Heart right ventricle (tissue), 16 donors: ENCODE measurements at regions of chr18 and their contacts with region 1.

Region 1: GRCh38 chr18:58529714-58530354 is 99.1 kb downstream of the ALPK2 start:
- DNase-seq: peak; percentile 41 to 58
- ATAC-seq: peak; percentile 46 to 75 (median 58)
- H3K4me3 ChIP-seq: no peak overlapping the region
- H3K27ac ChIP-seq: peak overlapping the region in 2 of 10 donors; percentile 16 to 26
- H3K4me1 ChIP-seq: peaks cover 0 to 8% (median 0%) of the 10 kb centered on the region in 9 donors
- H3K27me3 ChIP-seq: no peaks in the 10 kb centered on the region
- CTCF ChIP-seq: peak; percentile 55 to 86 (median 77)

Region 2: DNA sequence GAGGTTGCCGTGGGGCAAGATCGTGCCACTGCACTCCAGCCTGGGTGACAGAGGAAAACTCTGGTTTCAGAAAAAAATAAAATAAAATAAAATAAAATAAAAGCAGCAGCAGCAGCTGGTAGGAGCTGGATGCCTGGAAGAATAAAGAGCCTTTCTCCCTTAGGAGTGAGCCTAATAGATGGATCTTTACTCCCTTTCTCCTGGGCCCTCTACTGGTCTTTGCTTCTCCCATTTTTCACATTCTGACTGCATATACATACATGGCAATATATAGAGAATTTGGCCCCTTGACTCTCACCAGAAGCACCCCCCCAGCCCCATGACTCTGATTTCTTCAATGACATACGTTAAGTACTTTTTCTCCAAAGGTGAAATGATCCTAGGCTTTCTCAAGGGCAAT is 131.6 kb after region 1 on chr18:
- intact Hi-C with region 1: loop called in 2 of 10 experiments (anchors 5 to 10 kb)
- DNase-seq: no peak
- ATAC-seq: peak in 6 of 8 donors; percentile 45 to 73 (median 58)
- H3K4me3 ChIP-seq: no peak overlapping the region
- H3K27ac ChIP-seq: no peak overlapping the region
- H3K4me1 ChIP-seq: peaks cover 0 to 20% (median 11%) of the 10 kb centered on the region in 9 donors
- H3K27me3 ChIP-seq: no peaks in the 10 kb centered on the region
- CTCF ChIP-seq: peak in 5 of 9 donors; percentile 23 to 49 (median 44)

Region 3: DNA sequence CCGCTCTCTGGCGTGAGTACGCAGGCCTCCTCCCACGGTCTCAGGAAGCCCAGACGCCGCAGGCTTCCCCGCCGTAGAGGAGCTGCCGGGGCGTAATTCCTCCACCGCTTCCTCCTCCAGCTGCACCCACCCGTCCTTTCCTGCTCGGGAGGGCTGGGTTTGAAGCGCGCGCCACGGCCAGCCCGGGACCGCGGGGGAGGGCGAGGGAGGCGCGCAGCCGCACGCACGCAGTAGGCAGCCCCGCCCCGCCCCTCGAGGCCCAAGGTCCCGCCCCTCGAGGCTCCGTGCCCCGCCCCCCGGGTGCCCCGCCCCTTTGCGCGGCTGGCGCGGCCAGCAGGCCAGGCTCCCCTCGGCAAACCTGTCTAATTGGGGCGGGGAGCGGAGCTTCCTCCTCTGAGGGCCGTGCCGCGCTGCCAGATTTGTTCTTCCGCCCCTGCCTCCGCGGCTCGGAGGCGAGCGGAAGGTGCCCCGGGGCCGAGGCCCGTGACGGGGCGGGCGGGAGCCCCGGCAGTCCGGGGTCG is 141.3 kb after region 1 on chr18 and contains the start of gene MALT1:
- intact Hi-C with region 1: loop called in 6 of 10 experiments (anchors 5 to 10 kb)
- DNase-seq: peak; percentile 92 to 95
- ATAC-seq: peak; percentile 97 to 99 (median 98)
- H3K4me3 ChIP-seq: peak within 1 kb of the TSS; percentile 22 to 97 (median 76)
- H3K27ac ChIP-seq: peak within 1 kb of the TSS; percentile 88 to 99 (median 96)
- H3K4me1 ChIP-seq: peaks cover 0 to 42% (median 26%) of the 10 kb centered on the region in 9 donors
- H3K27me3 ChIP-seq: no peaks in the 10 kb centered on the region
- CTCF ChIP-seq: no peak
- total RNA-seq, gene MALT1: 8.1 to 20.0 (median 10.6) TPM

Region 4: GRCh38 chr18:58768293-58768974 is 238.6 kb after region 1 on chr18:
- intact Hi-C with region 1: loop called (anchors 1 to 5 kb)
- DNase-seq: peak; percentile 69 to 77
- ATAC-seq: peak; percentile 88 to 94 (median 92)
- H3K4me3 ChIP-seq: peak overlapping the region in 9 of 10 donors; percentile 9 to 47 (median 33)
- H3K27ac ChIP-seq: peak overlapping the region in 4 of 10 donors; percentile 21 to 30 (median 24)
- H3K4me1 ChIP-seq: peaks cover 4 to 23% (median 13%) of the 10 kb centered on the region in 9 donors
- H3K27me3 ChIP-seq: peaks cover 0 to 48% (median 0%) of the 10 kb centered on the region in 7 donors
- CTCF ChIP-seq: peak; percentile 63 to 96 (median 85)

Region 5: GRCh38 chr18:59070181-59070912 is 540.5 kb after region 1 on chr18:
- intact Hi-C with region 1: loop called in 4 of 10 experiments (anchors 10 kb)
- DNase-seq: peak; percentile 84
- ATAC-seq: peak; percentile 76 to 91 (median 85)
- H3K4me3 ChIP-seq: no peak overlapping the region
- H3K27ac ChIP-seq: peak overlapping the region in 1 of 10 donors; percentile 16
- H3K4me1 ChIP-seq: peaks cover 0 to 7% (median 0%) of the 10 kb centered on the region in 9 donors
- H3K27me3 ChIP-seq: no peaks in the 10 kb centered on the region
- CTCF ChIP-seq: peak; percentile 73 to 95 (median 89)

Region 6: DNA sequence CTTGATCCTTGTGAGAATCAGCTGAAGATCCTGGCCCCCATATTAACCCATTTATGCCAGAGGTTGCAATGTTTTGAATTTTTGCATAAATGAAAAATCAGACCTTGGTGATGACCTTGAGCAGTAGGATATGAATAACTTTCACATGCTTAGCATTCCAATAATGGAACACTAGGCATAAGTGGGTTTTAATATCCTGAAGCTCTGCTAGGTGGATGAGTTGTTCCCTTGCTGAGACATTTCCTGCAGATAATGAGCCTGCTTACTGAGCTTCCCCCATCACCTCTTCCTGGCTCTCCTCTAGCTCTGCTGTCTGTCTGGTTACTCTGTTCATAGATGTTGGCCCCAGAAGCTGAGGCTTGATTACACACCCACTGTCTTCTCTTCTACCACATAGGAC is 584.3 kb after region 1 on chr18:
- intact Hi-C with region 1: no loop called
- DNase-seq: no peak
- ATAC-seq: no peak
- H3K4me3 ChIP-seq: no peak overlapping the region
- H3K27ac ChIP-seq: no peak overlapping the region
- H3K4me1 ChIP-seq: no peaks in the 10 kb centered on the region
- H3K27me3 ChIP-seq: peaks cover 5 to 51% (median 34%) of the 10 kb centered on the region in 7 donors
- CTCF ChIP-seq: no peak